A549 (cell line): ENCODE measurements at regions of chr19 and their contacts with region 1.

Region 1: DNA sequence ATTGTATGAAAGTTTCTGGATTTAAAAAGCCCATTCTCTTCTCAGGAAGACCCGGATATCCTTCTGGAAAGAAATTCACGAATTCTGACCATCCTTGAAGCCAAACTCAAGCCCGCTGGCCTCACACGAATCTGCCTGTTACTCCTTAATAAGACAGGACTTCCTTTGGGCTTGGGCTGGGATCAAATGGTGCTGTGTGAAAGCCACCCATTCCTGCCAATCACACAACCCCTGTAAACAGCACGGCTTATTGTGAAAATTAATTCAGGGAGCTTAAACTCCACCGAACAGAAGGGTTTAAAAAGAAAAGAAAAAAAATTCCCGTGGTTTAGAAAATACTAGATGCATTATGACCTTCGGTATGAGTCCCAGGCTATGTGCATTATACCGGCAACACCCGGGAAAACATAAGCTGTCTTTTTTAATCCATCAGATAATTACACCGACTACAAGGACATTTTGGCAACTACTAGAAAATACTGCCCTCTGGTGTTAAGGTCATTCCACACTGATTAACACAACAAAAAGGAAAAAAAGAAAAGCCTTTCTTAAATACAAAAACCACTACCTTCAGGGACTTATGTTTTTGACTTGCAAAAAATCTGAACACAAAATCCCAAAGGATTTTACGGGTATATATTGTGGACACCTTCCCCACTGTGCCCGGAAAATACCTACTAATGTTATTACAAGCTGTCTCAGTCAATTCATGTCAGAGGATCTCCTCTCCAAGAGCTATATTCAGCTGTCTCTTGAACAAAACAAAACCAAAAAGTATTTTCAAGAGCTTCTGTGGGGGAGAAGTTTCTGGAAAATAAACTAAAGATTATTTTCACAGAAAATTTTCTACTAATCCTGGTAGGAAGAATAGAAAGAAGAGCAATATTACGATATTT is 76.0 kb upstream of the LSM14A start:
- DNase-seq: peak; percentile 78 to 79
- ATAC-seq: peak; percentile 78 to 91
- H3K4me3 ChIP-seq: no peak overlapping the region; the same call in 2 of the 3 replicates
- H3K27ac ChIP-seq: no peak overlapping the region
- H3K4me1 ChIP-seq: no peaks in the 10 kb centered on the region
- CTCF ChIP-seq: peak; percentile 99
- EP300 ChIP-seq: no peak
- POLR2A ChIP-seq: no peak
- RAD21 ChIP-seq: peak; percentile 97

Region 2: DNA sequence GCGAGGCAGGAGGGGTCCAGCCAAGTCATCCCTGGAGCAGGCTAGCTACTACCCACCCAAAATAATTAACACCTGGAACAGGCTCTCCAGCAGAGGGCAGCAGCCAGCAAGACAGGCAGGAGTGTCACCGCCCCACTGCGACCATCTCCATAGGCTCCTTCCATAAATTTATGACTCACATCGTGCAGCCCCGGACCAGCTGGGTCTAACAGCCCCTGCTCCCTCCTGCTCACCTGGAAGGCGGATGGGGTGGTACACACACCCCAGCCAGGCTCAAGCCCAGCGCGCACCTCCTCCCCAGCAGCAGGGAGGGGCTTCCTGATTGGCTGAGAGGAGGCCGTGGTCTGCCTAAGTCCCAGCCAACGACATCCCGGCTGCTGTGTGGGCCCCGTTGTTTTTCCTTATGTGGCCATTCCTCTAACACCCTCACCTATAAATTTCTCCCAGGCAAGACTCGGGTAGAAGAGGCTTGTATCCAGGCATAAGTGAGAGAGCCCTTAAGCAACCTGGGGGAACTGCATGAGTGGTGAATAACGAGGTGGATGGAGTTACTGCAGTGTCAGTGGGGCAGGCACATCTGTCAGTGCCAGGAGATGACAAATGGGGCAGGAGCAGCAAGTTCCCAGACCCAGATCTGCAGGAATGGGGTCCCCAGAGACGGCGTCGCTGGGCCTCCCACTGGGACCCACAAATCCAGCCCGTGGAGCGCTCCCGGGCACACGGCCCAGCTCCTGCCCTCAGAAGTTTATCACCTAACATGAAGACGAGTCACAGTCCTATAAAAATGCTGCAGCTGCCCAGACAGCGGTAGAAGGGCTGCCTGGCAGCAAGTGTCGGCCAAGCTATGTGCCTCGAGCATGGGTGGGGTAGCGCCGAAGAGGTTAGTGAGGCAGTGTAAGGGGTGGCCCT is 679.7 kb before region 1 on chr19:
- CTCF ChIA-PET with region 1: interaction called, 10 read pairs
- POLR2A ChIA-PET with region 1: no interaction called
- DNase-seq: peak; percentile 84 to 99
- ATAC-seq: peak; percentile 64 to 92
- H3K4me3 ChIP-seq: no peak overlapping the region
- H3K27ac ChIP-seq: no peak overlapping the region
- H3K4me1 ChIP-seq: no peaks in the 10 kb centered on the region
- CTCF ChIP-seq: peak; percentile 98
- EP300 ChIP-seq: no peak
- POLR2A ChIP-seq: no peak
- RAD21 ChIP-seq: peak; percentile 85 to 91

Region 3: DNA sequence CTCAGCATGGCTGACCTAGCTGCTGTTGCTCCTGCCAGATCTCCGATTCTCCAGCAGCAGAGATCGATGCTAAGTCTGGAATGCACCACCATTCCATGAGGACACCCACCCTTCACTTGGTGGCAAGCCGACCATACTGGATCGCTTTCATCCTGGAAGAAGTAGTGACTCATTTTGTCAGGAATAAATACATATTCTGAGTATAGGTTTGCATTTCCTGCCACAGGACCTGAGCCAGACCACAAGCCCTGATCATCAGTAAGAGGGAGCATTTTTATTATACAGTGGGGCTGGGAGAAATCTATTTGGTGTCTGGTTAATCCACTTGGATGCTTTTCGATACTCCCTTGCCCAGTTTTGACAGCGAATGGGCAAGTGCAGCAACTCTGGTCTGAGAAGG is 310.5 kb before region 1 on chr19:
- CTCF ChIA-PET with region 1: interaction called, 510 read pairs
- POLR2A ChIA-PET with region 1: no interaction called
- DNase-seq: no peak
- ATAC-seq: no peak
- H3K4me3 ChIP-seq: no peak overlapping the region
- H3K27ac ChIP-seq: no peak overlapping the region
- H3K4me1 ChIP-seq: peaks cover 19% of the 10 kb centered on the region
- CTCF ChIP-seq: no peak
- EP300 ChIP-seq: no peak
- POLR2A ChIP-seq: no peak
- RAD21 ChIP-seq: no peak

Region 4: DNA sequence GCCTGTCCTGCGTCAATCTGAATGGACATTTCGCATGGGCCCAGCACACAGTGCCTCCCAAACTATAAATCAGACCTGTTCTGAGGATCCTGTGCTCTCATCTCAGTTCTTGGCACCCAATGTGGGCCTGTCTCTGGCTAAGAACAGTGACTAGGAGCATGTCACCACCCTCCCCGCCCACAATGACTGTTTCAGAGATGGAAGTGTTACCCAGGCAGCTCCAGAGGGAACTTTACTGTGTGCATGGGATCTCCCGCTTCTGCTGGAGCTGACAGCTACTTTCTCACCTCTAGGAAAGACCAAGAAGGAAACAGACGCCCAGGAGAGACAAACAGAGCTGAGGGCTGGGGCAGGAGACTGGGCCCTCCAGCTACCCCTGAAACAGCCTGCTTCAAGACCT is 254.6 kb before region 1 on chr19:
- CTCF ChIA-PET with region 1: interaction called, 10 read pairs
- POLR2A ChIA-PET with region 1: no interaction called
- DNase-seq: no peak
- ATAC-seq: peak in 1 of 2 experiments; percentile 25; a peak in 3 of 6 replicates
- H3K4me3 ChIP-seq: no peak overlapping the region
- H3K27ac ChIP-seq: no peak overlapping the region
- H3K4me1 ChIP-seq: no peaks in the 10 kb centered on the region
- CTCF ChIP-seq: no peak
- EP300 ChIP-seq: no peak
- POLR2A ChIP-seq: no peak
- RAD21 ChIP-seq: no peak

Region 5: DNA sequence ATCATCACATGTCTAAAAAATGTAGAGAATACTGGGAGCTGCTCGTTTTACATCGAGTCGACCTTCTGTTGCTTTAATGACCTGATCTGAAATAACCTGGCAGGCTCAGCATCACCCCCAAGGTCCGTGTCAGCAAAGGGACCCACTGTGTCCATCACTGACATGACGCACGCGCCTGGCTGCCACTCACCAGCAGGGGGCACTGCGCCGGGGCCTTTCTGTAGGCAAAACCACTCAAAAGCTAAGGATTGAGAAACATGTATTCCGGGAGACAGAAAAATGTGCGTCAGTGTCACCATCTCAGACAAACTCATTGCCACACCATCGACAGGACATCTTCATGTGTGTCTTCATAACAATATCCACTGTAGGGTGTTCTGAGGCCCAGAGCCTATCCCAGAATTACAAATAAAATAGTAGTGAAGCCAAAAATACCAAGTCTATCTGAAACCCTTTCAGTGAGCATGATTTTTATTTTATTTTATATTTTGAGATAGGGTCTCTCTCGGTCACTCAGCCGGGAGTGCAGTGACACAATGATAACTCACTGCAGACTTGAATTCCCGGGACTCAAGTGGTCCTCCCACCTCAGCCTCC is 54.2 kb before region 1 on chr19:
- CTCF ChIA-PET with region 1: interaction called, 58 read pairs
- POLR2A ChIA-PET with region 1: no interaction called
- DNase-seq: peak; percentile 70 to 79
- ATAC-seq: peak; percentile 93 to 95
- H3K4me3 ChIP-seq: no peak overlapping the region
- H3K27ac ChIP-seq: no peak overlapping the region
- H3K4me1 ChIP-seq: no peaks in the 10 kb centered on the region
- CTCF ChIP-seq: peak; percentile 96
- EP300 ChIP-seq: no peak
- POLR2A ChIP-seq: no peak
- RAD21 ChIP-seq: peak; percentile 70 to 86

Region 6: GRCh38 chr19:34075661-34076091 is 20.6 kb before region 1 on chr19:
- CTCF ChIA-PET with region 1: interaction called, 63 read pairs
- POLR2A ChIA-PET with region 1: no interaction called
- DNase-seq: no peak
- ATAC-seq: no peak
- H3K4me3 ChIP-seq: no peak overlapping the region
- H3K27ac ChIP-seq: no peak overlapping the region
- H3K4me1 ChIP-seq: no peaks in the 10 kb centered on the region
- CTCF ChIP-seq: no peak
- EP300 ChIP-seq: no peak
- POLR2A ChIP-seq: no peak
- RAD21 ChIP-seq: no peak

Region 7: DNA sequence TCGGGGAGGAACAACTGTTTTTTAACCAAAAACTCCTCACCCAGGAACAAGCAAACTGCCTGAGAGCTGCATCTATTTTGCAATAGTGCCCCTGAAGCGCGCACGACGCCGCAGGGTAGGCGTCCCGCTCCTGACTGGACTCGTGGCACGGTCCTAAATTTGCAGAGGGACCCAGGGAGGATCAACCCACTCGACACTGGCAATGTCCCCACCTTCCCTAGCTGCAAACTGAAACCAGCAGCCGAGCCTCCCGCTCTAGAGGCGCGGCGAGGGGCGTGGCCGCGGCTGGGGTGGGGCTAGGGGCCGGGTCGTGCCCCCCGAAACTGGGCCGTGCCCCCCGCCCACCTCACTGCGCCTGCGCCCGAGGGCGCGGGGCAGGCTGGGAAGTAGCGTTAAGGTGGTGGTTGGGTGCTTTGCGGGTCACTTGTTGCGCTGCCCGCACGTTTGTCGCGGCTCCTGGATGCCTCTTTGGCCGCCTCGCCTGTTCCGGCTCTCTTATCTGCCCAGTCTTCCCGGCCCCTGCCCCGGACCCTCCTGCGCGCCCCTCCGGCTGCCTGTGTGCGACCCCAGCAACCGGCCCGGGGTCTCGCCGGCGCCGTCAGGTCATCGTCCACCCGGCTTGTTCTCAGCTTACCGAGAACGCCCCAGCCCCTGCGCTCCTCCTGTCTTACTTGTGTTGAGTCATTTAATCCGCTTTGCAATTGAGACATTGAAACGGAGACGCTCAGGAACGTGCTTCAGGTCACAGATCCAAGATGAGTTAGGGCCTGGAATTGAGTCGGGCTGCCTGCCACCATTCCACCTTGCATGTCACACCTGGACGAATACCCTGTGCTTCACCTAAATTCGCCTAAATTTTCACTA is 38.2 kb after region 1 on chr19:
- CTCF ChIA-PET with region 1: interaction called, 11 read pairs
- POLR2A ChIA-PET with region 1: interaction called, 3 read pairs
- DNase-seq: peak; percentile 93 to 99
- ATAC-seq: peak; percentile 94 to 97
- H3K4me3 ChIP-seq: peak overlapping the region; percentile 65
- H3K27ac ChIP-seq: peak overlapping the region; percentile 87 to 93
- H3K4me1 ChIP-seq: peaks cover 10% of the 10 kb centered on the region; the same call in 2 of the 3 replicates
- CTCF ChIP-seq: no peak
- EP300 ChIP-seq: no peak
- POLR2A ChIP-seq: peak; percentile 98
- RAD21 ChIP-seq: no peak

Region 8: GRCh38 chr19:34316741-34317301 is 220.6 kb after region 1 on chr19:
- CTCF ChIA-PET with region 1: no interaction called
- POLR2A ChIA-PET with region 1: no interaction called
- DNase-seq: peak; percentile 36 to 43
- ATAC-seq: peak; percentile 44 to 69
- H3K4me3 ChIP-seq: no peak overlapping the region
- H3K27ac ChIP-seq: no peak overlapping the region
- H3K4me1 ChIP-seq: peaks cover 25% of the 10 kb centered on the region
- CTCF ChIP-seq: no peak
- EP300 ChIP-seq: no peak
- POLR2A ChIP-seq: no peak
- RAD21 ChIP-seq: no peak